ENCODE measurements at regions of chr20 and their contacts with region 1.

Region 1: GRCh38 chr20:51026269-51026668 is 3.4 kb upstream of the KCNG1 start:
- DNase-seq: no peak
- H3K4me3 ChIP-seq: no peak overlapping the region
- H3K27me3 ChIP-seq: peaks cover 22% of the 10 kb centered on the region
- CTCF ChIP-seq: no peak

Region 2: GRCh38 chr20:50980851-50981713 is 45.2 kb before region 1 on chr20:
- CTCF ChIA-PET with region 1: no interaction called
- POLR2A ChIA-PET with region 1: no interaction called
- DNase-seq: no peak
- H3K4me3 ChIP-seq: no peak overlapping the region
- H3K27me3 ChIP-seq: no peaks in the 10 kb centered on the region
- CTCF ChIP-seq: peak; percentile 79

Region 3: GRCh38 chr20:51014797-51015722 is 11.2 kb before region 1 on chr20:
- CTCF ChIA-PET with region 1: interaction called, 11 read pairs
- POLR2A ChIA-PET with region 1: no interaction called
- DNase-seq: no peak
- H3K4me3 ChIP-seq: no peak overlapping the region
- H3K27me3 ChIP-seq: no peaks in the 10 kb centered on the region
- CTCF ChIP-seq: peak; percentile 88

Region 4: GRCh38 chr20:51195419-51195901 is 169.2 kb after region 1 on chr20:
- CTCF ChIA-PET with region 1: no interaction called
- POLR2A ChIA-PET with region 1: no interaction called
- DNase-seq: no peak
- H3K4me3 ChIP-seq: no peak overlapping the region
- H3K27me3 ChIP-seq: peaks cover 2% of the 10 kb centered on the region; the same call in 1 of the 2 replicates
- CTCF ChIP-seq: no peak